ENCODE measurements at regions of chr5 and their contacts with region 1.

Region 1: DNA sequence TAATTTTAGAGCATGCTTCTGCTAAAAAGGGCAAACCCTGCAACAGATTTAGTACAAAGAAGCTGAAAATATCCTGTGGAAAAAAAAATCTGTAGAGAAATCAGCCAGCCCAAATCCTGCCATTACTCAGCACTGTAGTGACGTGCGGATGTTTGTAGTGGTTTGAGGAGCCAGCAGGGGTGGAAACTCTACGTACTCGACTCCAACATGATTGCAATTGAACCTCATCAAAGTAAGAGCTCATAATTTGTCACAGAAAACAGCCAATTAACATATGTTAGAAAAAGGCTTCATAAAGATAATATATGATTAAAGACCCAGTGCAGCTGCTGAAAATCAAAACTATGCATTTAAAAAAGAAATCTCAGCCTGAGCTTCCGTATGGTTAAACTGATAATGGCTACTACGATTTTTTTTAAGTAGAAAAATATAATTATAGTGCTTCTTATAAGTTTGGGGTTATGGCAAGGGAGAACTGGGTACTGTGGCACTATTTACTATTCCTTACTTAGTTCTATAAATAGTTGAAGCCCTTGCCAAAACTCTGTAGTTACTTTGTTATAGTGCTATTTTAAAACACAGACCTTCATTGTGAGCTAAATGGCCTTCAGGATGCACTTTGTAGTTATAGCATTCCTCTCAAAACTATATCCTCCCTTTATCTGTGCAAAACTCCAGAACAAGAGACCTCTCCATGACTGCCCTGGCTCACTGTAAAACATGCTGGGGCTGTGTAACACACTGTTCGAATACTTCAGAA is 49.4 kb downstream of the MEF2C start:
- DNase-seq: no peak

Region 2: GRCh38 chr5:88785391-88786219 is 47.9 kb before region 1 on chr5:
- intact Hi-C with region 1: loop called in 1 of 2 experiments (anchors 2 kb)
- DNase-seq: no peak

Region 3: DNA sequence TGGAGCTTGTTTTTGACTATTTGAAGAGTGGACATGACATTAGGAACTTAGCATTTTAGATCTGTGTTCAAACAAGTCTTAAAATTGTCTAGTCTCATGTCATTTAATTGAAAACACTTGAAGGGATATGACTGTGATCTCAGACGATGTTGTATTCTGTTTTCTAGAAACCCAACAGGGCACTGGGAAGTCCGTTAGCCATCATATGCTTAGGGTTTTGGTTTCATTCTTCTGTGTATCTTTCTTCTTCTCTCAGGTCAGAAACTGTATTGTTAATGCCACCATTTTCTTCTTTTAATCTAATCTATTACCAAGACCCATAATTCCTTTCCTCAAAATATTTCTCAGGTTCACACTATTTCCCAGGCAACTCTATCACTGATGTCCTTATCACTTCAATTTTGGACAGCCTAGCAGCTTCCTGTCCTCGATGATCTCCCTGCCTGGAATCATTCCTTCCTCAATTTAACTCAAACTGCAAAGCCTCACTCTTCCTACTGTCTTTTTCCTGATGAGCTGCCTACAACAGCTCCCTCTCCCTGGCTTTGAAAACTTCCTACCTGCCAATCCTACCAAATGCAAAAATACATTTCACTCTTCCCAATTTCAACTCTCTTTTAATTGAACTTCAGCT is 28.3 kb before region 1 on chr5:
- intact Hi-C with region 1: no loop called
- DNase-seq: no peak

Region 4: DNA sequence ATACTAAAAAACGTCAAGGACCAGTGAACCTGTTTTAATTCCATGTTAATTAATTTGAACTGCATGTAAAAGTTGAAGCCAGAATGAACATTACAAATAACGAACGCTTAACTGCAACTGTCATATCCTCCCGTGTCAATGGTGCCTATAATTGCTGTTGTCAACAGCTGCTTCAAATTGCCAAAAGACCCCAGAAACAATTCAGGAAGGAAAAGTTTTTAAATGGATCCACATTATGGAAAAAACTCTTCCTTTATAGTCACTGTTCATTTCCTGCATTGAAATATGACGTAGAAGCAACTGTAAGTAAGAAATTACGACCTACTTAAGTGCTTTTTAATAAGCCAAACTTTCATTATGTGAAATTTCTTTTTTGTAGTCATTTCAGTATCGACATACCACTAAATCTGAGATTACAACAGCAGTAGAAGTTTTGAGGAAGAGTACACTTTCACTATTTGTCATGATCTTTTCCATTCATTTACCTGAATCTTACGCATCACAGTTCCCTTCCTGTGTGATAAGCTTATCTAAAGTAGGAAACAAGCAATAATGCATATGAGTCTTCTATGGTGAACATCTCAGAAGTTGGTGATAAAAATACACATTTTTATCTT is 11.6 kb after region 1 on chr5:
- intact Hi-C with region 1: loop called in 1 of 2 experiments (anchors 2 kb)
- DNase-seq: no peak

Region 5: GRCh38 chr5:88883059-88883835 is 49.7 kb after region 1 on chr5 and contains the start of gene MEF2C:
- intact Hi-C with region 1: loop called (anchors 2 to 10 kb)
- DNase-seq: peak; percentile 93
- total RNA-seq, gene MEF2C: 86.7 to 94.1 TPM

Region 6: GRCh38 chr5:89471541-89471940 is 638.0 kb after region 1 on chr5:
- intact Hi-C with region 1: no loop called
- DNase-seq: no peak